H1 (cell line): ENCODE measurements at regions of chr20 and their contacts with region 1.

Region 1: DNA sequence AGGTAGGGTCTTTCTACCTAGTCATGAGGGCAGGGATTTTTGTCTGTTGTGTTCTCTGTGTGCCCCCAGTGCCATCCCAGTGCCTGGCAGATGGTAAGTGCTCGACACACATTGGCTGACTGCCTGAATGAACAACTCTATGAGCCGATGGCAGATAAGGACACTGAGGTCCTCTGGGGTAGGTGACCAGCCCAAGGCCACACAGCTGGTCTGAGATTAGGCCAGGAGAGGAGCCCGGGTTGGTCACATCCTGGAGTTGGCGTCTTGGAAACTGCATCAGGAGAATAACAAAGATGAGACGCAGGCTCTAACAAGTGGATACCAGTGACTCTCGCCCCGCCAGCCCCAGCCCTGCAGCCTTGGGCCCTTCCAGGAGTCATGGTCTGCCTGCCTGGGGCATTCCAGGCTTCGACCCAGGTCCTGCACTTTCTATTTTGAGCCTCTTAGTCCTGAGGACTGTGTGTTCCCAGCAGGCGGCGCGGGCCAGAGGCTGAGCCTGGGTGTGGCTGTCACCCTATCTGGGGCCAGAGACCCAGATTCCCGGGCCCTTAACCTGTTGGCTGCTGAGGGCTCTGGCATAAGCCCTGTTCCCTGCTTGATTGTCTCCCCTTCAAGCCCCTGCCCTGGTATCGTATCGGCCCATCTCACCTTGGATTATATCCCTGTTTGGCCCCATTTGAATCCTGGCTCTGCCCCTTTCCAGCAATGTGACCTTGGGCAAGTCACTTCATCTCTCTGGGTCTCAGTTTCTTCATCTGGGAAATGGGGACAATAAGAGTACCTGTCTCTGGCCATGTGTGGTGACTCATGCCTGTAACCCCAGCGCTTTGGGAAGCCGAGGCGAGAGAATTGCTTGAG is 88.3 kb downstream of the CEBPB start:
- DNase-seq: no peak
- H3K4me3 ChIP-seq: no peak overlapping the region
- H3K27ac ChIP-seq: no peak overlapping the region
- H3K4me1 ChIP-seq: peaks cover 0 to 3% (median 0%) of the 10 kb centered on the region in 4 experiments; a peak in 1 of 7 replicates
- H3K27me3 ChIP-seq: no peaks in the 10 kb centered on the region; a peak in 1 of 7 replicates
- CTCF ChIP-seq: no peak
- EP300 ChIP-seq: no peak
- POLR2A ChIP-seq: no peak
- RAD21 ChIP-seq: no peak

Region 2: DNA sequence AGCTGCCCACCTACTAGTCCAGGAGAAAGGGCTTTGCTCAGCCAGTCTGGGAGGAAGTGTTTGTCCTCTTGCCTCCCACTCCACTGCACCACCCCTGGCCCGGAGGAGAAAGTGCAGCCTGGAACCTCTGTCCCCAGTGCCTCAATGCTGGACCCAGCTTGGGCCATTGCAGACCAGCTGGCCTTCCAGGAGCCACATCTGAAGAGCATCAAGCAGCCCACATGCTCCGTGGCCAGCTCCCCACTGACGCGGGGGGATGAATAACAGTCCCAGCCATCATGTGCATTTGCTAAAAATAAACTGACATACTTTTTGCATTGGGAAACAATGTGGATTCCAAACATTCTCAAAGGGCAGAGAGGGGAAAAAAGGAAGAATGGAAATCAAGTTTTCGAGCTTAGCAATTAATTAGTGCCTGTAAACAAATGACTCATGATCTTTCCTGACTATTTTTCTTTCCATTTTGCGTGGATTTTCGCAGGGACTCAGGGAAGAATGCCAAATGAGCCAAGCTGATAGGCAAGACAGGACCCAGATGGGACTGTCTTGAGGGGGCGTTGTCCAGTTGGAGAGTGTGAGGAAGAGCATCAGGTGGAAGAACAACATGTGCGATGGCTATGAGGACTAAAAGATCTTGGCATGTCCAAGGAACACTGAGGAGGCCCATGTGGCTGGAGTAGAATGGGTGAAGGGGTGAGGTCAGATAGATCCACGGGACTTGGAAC is 54.2 kb before region 1 on chr20:
- CTCF ChIA-PET with region 1: interaction called, 16 read pairs
- POLR2A ChIA-PET with region 1: no interaction called
- DNase-seq: no peak
- H3K4me3 ChIP-seq: no peak overlapping the region
- H3K27ac ChIP-seq: no peak overlapping the region
- H3K4me1 ChIP-seq: no peaks in the 10 kb centered on the region; a peak in 1 of 7 replicates
- H3K27me3 ChIP-seq: no peaks in the 10 kb centered on the region
- CTCF ChIP-seq: peak; percentile 39 to 64 (median 60)
- EP300 ChIP-seq: no peak
- POLR2A ChIP-seq: no peak
- RAD21 ChIP-seq: peak in 1 of 2 experiments; percentile 20; a peak in 2 of 4 replicates

Region 3: DNA sequence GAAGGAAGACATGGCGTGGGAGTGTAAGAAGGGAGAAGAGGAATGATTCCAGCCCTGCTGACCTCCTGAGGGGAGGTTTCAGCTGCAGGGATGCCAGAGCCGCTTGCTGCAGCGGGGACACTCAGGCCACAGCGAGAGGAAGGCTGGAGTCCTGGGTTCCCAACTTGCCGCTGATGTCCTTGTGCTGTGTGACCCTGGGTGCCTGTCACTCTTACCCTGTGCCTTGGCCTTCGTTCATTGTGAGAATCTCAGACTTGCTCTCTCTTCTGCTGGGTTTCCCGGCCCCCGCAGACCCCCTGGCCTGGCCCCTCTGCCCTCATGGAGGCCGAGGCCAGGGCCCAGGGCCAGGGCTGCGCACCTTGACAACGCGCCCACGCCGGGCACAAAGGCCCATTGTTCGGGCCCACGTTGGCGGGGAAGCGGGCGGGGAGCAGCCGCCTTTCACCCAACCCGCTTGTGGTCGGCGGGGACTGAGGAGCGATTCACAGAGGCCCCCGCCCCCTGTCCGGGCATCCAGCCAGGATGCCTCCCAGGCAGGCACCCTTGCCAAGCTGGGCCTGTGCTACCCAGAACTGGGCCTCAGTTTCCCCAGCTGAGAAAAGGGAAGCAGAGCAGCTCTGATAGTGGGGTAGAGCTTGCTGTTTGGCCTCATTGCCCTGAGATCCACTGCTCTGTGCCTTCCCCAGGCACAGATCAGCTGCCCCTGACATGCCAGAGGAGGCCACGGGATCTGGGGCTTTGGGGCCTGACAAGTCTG is 35.9 kb before region 1 on chr20:
- CTCF ChIA-PET with region 1: interaction called, 10 read pairs
- POLR2A ChIA-PET with region 1: no interaction called
- DNase-seq: no peak
- H3K4me3 ChIP-seq: no peak overlapping the region
- H3K27ac ChIP-seq: no peak overlapping the region
- H3K4me1 ChIP-seq: 0 out of 7 replicates have a peak, but pooled peaks cover 0 to 2% (median 0%) of the 10 kb centered on the region in 4 experiments
- H3K27me3 ChIP-seq: no peaks in the 10 kb centered on the region; a peak in 1 of 7 replicates
- CTCF ChIP-seq: no peak
- EP300 ChIP-seq: no peak
- POLR2A ChIP-seq: no peak
- RAD21 ChIP-seq: no peak